GM10248 (cell line): ENCODE measurements at regions of chr5 and their contacts with region 1.

Region 1: DNA sequence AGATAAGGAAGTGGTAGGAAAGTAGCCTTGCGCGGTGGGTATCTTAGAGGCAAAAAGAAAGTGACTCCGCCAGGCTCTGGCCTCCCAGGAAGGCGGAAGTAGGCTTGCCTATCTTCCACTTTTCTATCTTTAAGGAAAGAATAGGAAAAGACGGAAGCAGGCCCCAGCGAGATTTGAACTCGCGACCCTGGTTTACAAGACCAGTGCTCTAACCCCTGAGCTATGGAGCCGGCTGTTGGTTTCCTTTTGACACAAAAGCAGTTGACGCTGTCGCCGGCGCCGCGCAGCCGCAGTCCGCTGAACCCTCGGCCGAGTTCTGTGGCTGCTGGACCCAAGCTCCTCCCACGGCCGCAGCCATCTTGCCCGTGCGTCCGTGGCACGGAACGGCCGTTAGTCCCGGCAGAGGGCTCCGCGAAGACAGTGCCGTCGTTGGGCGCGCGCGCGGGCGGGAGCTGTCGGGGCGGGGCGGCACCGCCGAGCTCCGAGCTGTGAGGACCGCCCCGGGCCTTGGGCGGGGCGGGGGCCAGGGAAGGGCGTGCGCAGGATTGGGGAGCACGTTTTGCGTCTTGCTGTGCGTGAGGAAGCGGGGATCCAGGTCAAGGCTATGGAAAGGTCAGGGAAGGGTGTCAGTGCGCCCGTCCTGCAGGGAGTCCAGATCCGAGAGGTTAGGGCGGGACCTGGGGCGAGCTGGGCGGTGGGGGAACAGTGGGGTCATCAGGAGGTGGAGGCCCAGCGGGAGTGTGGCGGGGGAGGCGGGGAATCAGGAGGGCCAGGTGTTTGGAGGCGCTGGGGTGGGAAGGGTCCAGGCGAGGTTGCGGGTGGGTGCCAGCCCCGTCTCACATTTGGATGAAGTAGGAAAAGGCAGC is 13.2 kb downstream of the TRIM7 start:
- DNase-seq: peak; percentile 92
- CTCF ChIP-seq: no peak

Region 2: GRCh38 chr5:181052672-181053487 is 138.9 kb before region 1 on chr5:
- CTCF ChIA-PET with region 1: no interaction called
- POLR2A ChIA-PET with region 1: no interaction called
- DNase-seq: no peak
- CTCF ChIP-seq: no peak

Region 3: DNA sequence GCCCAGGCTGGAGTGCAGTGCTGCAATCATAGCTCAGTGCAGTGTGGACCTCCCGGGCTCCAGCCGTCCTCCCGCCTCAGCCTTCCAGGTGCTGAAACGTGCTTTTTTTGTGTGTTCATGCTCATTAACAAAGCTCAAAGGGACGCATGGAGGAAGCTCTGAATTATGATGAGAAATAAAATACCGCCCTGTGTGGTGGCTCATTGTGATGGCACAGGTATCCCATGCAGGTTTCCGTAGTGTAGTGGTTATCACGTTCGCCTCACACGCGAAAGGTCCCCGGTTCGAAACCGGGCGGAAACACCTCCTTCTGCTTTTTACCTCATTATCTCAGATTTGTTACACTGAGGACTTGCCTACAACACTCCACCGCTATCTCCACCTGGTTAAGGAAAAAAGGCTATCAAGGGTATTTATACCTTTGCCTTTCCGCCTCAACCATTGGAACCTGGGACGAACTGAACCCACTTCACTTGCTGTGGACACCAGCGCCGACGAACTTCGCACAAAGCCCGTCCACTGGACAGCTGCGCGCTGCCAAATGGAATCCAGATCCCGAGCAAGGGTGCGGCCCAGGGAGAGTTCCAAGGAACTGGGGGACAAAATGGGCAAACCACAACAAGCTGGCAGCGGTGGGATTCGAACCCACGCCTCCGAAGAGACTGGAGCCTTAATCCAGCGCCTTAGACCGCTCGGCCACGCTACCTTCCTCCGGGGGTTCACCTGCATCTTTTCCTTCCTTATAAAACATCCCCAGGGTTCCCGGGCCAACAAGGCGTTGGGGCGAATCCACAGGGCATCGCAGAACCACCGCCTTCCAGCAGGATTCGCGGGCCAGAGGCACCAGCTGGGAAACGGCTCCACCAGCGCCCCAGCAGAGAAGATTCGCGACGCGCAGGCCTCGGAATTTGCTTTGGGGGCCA is 18.1 kb before region 1 on chr5:
- CTCF ChIA-PET with region 1: interaction called, 27 read pairs
- POLR2A ChIA-PET with region 1: no interaction called
- DNase-seq: peak; percentile 48
- CTCF ChIP-seq: no peak

Region 4: DNA sequence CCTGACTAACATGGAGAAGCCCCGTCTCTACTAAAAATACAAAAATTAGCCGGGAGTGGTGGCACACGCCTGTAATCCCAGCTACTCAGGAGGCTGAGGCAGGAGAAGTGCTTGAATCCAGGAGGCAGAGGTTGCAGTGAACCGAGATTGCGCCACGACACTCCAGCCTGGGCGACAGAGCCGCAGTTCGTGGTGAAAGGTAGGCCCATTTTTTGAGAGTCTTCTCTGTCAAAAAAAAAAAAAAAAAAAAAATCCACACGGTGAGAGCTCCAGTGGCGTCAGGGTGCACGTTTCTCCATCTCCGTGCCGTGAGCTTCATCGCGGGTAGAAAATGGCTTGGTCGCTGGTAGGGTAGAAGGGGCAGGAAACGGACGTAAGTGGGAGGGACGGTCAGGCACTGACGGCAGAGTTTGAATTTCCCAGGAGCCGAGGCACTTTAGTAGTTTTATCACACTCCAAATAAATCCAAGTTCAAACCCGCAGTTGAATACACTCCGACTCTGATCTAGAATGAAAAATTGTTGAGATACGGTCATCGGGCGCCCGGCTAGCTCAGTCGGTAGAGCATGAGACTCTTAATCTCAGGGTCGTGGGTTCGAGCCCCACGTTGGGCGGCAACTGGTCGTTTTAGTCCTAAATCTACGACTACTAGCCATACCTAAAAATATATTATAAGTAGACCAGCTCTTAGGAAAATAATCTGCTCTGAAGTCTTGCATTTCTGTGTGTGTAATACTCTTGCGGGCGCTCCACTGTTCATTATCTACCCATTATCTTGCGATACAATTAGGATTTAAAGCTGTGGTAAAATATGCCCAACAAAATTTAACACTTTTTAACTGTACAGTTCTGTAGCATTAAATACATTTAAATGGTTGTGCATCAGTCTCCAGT is 15.7 kb after region 1 on chr5:
- CTCF ChIA-PET with region 1: interaction called, 109 read pairs
- POLR2A ChIA-PET with region 1: interaction called, 8 read pairs
- DNase-seq: no peak
- CTCF ChIP-seq: no peak

Region 5: DNA sequence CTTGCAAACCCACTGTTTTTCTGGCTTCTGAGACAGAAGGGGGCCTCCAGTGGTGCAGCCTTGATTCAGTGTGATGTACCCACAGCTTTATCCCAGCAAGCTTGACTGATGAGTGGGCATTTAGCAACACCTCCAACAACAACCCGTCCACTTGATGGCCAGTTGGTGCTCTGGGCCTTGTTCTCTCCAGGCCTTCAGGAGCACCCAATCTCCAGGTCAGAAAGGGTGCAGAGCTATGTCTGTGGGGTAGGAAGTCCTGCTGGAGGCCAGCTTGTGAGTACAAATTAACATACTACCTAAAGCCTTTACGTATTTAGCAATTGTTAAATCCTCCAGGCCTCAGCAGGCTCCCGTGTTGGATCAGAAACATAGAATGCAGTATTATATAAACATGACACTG is 79.3 kb after region 1 on chr5:
- CTCF ChIA-PET with region 1: no interaction called
- POLR2A ChIA-PET with region 1: no interaction called
- DNase-seq: no peak
- CTCF ChIP-seq: no peak